Endothelial cell of umbilical vein (primary cell): ENCODE measurements at regions of chr12 and their contacts with region 1.

Region 1: DNA sequence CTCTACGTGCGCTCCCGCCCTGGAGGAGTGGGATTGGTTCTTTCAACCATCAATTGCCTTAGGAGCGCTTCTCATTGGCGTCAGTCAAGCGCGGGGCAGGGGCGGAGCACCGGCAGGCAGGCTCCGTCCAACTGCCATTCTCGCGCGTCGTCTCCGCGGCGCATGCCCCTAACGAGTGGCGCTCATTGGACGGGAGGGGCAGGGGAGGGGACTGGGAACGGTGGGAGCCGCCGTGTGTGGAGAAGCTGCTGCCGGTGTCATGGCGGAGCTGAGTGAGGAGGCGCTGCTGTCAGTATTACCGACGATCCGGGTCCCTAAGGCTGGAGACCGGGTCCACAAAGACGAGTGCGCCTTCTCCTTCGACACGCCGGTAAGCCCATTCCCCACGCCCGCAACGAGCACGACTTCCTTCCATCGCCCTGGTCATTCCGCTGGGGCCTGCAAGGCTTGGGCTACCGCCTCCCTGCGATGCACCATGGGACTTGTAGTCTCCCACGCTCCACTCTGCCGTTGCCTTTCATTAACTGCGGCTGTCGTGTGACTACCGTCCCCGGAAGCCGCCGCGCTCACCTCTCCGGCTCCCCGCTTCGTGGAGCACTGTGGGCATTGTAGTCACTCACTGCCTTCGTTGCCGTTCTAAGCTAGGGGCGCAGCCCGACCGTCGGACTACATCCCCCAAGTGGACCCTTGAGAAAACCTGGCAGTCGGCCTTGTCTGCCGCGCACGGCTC is at the start of gene USP5:
- DNase-seq: peak; percentile 100
- H3K4me3 ChIP-seq: peak within 1 kb of the TSS; percentile 63 to 93 (median 76)
- H3K27ac ChIP-seq: peak within 1 kb of the TSS; percentile 33
- H3K4me1 ChIP-seq: peaks cover 24% of the 10 kb centered on the region
- H3K27me3 ChIP-seq: no peaks in the 10 kb centered on the region
- CTCF ChIP-seq: no peak
- POLR2A ChIP-seq: peak; percentile 54
- total RNA-seq, gene USP5: 126 and 135 TPM in 2 replicates

Region 2: DNA sequence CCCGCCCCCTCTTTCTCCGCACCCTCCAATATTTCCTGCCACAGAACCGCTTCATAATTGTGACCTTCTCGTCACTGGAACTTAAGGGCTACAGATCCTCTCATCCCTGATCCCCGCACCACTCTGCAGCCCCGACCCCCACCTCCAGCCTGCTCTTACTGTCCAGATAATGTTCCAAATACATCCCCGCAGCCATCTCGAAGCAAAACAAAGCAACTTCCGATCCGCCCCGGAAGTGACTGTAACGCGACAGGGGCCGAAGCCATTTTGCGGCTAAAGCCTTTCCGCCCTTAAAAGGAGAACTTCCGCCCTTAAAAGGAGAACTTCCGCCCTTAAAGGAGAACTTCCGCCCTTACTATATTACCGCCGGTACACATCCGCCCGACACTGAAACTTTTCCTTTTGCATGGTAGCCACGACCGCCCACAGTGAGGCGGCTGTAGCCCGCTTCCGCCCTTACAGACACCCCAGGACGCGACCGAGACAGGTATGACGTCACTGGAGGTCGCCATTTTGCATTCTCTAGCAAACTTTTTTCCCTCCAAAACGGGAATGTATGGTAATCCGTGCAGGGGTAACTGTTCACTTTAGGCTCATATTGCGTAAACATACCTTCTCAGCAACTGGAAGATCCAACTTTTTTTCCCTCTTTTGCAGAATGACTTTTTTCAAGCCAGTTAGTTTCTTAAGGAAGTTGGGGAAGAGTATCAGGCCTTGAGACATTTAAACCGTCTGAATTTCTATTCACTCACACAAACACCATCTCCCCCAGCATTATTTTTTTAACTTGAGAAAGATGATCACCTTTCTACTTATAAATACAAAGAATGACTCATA is 189.0 kb before region 1 on chr12 and contains the start of gene ING4:
- CTCF ChIA-PET with region 1: no interaction called
- POLR2A ChIA-PET with region 1: no interaction called
- dilution Hi-C with region 1: no loop called
- intact Hi-C with region 1: loop called (anchors 1 kb)
- DNase-seq: peak; percentile 99
- H3K4me3 ChIP-seq: peak within 1 kb of the TSS; percentile 23 to 95 (median 82)
- H3K27ac ChIP-seq: peak within 1 kb of the TSS; percentile 61
- H3K4me1 ChIP-seq: peaks cover 10% of the 10 kb centered on the region
- H3K27me3 ChIP-seq: no peaks in the 10 kb centered on the region
- CTCF ChIP-seq: no peak
- POLR2A ChIP-seq: peak; percentile 60
- total RNA-seq, gene ING4: 26.3 and 34.7 TPM in 2 replicates

Region 3: DNA sequence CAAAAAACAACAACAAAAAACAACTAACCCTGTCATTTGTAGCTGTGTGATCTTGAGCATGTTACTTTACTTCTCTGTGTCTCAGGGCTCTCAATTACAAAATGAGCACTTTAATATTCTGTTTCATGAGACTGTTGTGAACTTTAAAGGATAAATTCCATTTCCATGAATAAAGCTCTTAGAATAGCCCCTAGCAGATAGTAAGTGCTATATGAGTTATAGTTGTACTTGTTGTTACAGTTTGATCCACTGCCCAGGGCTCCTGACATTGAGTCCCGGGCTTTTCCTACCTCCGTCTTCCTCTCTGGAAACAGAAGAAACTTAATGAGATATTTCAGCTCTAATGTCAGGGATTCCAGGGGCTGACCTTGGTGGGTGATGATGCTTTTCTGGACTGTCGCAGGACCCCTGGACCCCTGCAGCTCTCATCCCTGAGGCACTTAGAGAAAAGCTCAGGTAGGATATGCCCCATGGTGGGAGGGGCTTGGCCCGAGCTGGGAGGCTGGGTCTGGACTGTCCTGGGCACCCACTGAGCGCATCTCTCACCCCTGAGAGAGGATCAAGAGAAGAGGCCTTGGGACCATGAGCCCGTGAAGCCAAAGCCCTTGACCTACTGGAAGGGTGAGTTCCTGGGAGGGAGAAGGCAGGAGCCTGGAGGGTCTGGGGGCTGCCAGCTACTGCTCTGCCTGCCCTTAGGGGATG is 18.7 kb before region 1 on chr12:
- CTCF ChIA-PET with region 1: interaction called, 7 read pairs
- POLR2A ChIA-PET with region 1: no interaction called
- dilution Hi-C with region 1: no loop called
- intact Hi-C with region 1: loop called (anchors 2 kb)
- DNase-seq: no peak
- H3K4me3 ChIP-seq: no peak overlapping the region
- H3K27ac ChIP-seq: no peak overlapping the region
- H3K4me1 ChIP-seq: peaks cover 9% of the 10 kb centered on the region
- H3K27me3 ChIP-seq: no peaks in the 10 kb centered on the region
- CTCF ChIP-seq: no peak
- POLR2A ChIP-seq: no peak

Region 4: DNA sequence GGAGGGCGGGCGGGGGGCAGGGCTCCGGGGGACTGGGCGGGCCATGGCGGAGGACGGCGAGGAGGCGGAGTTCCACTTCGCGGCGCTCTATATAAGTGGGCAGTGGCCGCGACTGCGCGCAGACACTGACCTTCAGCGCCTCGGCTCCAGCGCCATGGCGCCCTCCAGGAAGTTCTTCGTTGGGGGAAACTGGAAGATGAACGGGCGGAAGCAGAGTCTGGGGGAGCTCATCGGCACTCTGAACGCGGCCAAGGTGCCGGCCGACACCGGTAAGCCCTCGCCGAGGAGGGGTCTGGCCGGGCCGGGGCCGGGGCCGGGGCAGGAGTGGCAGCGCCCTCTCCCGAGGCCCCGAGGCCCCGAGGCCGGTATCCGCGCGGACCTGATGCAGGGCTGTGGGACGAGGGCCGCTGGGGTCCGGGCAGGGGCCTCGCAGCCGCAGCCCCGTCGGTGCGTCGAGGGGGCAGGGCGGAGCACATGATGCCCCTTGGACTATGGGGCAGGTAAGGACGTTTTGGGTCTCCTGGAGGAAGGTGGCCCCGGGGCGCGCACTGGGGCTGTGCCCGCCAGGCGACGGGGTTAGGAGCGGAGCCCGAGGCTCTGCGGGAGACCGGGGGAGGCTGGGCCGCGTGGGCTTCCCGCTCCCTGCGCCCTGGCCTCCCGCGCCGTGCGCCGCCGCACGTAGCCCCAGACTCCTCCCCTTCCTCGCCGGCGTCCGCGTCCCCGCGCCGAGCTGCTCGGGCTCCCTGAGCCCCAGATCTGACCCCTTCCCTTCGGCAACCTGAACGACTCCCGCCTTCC is 15.5 kb after region 1 on chr12 and contains the start of gene TPI1:
- CTCF ChIA-PET with region 1: interaction called, 30 read pairs
- POLR2A ChIA-PET with region 1: interaction called, 48 read pairs
- dilution Hi-C with region 1: no loop called
- intact Hi-C with region 1: loop called (anchors 1 kb)
- DNase-seq: peak; percentile 78
- H3K4me3 ChIP-seq: peak within 1 kb of the TSS; percentile 60 to 95 (median 75)
- H3K27ac ChIP-seq: peak within 1 kb of the TSS; percentile 43
- H3K4me1 ChIP-seq: peaks cover 32% of the 10 kb centered on the region
- H3K27me3 ChIP-seq: no peaks in the 10 kb centered on the region
- CTCF ChIP-seq: no peak
- POLR2A ChIP-seq: peak; percentile 98
- total RNA-seq, gene TPI1: 643 and 676 TPM in 2 replicates